Sigmoid colon (tissue), 7 donors: ENCODE measurements at regions of chr5 and their contacts with region 1.

Region 1: GRCh38 chr5:95526871-95527270 is 27.9 kb downstream of the SKIC3 start:
- DNase-seq: no peak
- H3K4me3 ChIP-seq: no peak overlapping the region
- H3K27ac ChIP-seq: no peak overlapping the region
- H3K4me1 ChIP-seq: no peaks in the 10 kb centered on the region
- H3K27me3 ChIP-seq: no peaks in the 10 kb centered on the region
- CTCF ChIP-seq: no peak
- EP300 ChIP-seq: no peak
- POLR2A ChIP-seq: no peak

Region 2: DNA sequence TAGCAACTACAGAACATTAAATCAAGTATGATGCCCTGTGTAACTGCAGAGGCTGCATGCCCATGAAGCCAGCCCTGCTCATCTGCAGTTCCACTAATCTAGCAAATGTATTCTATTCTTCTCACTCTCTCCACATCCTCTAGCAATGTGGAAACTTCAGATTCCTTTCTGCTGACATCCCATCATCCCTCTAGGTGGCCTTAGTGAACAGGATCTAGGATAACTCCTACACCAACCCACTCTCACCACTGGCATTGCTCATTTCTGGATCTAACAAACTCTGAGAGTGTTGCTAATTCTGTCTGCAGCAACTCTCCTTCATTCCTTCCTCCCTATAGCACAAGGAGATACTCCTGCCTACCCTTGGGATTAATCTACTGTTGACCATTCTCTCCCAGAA is 54.9 kb before region 1 on chr5:
- intact Hi-C with region 1: loop called (anchors 10 kb)
- DNase-seq: no peak
- H3K4me3 ChIP-seq: no peak overlapping the region
- H3K27ac ChIP-seq: no peak overlapping the region
- H3K4me1 ChIP-seq: no peaks in the 10 kb centered on the region
- H3K27me3 ChIP-seq: no peaks in the 10 kb centered on the region
- CTCF ChIP-seq: no peak
- EP300 ChIP-seq: no peak
- POLR2A ChIP-seq: no peak